Activated CD8-positive, alpha-beta T cell treated with anti-CD3 and anti-CD28 coated beads for 36 hours (primary cell): ENCODE measurements at regions of chr21 and their contacts with region 1.

Region 1: DNA sequence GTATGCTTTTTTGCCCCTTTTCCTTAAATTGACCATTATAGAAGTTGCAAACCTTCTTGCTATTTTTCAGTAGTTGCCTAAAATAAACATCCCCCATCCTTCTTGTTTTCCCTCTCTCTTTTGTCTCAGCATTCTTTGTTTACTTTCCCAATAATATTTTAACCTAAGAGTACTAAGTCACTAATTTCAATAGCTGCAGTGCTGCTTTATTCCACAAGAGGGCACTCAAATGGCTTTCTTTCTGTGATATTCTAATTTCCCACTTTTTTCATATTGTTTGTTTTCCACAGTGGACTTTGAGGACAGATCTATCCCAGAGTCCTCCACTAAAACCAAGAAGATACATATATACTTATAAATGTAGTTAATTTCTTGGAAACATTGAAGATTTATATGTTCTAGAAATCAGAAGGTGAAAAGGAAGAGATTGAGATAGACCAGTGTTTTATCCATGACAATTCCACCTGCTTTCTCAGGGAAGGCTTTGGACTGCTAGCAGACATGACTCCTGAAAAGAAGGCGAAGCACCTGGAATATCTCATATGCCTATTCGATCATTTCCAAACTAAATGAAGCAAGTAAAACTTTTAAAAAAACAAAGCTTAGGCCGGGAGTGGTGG is 104.8 kb upstream of the GRIK1 start:
- DNase-seq: peak; percentile 10
- ATAC-seq: no peak
- H3K4me3 Mint-ChIP-seq: no peak overlapping the region
- H3K27ac Mint-ChIP-seq: no peak overlapping the region
- H3K4me1 Mint-ChIP-seq: no peaks in the 10 kb centered on the region
- H3K27me3 Mint-ChIP-seq: peaks cover 4% of the 10 kb centered on the region
- CTCF ChIP-seq: peak; percentile 93

Region 2: GRCh38 chr21:29860346-29860745 is 184.2 kb before region 1 on chr21:
- CTCF ChIA-PET with region 1: no interaction called
- POLR2A ChIA-PET with region 1: no interaction called
- intact Hi-C with region 1: no loop called
- DNase-seq: no peak
- ATAC-seq: no peak
- H3K4me3 Mint-ChIP-seq: no peak overlapping the region
- H3K27ac Mint-ChIP-seq: no peak overlapping the region
- H3K4me1 Mint-ChIP-seq: no peaks in the 10 kb centered on the region
- H3K27me3 Mint-ChIP-seq: peaks cover 9% of the 10 kb centered on the region
- CTCF ChIP-seq: no peak

Region 3: DNA sequence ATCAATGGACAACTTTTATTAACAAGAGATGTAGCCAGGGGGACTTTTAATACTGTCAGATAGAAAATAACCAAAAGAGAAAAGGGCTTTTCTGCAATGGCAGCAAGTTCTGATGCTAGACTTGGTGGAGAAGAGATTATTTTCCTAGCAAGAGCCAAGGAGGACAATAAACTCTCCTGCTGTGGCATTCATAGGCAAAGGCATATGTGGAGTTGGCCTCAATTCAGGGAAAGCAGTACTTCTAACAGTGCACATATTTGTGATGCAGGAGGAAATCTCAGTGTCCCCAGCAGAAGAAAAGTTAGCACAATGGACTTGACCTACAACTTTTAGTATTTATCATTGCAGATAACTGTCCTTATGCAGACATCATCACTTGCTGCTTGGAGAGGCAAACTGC is 29.7 kb before region 1 on chr21:
- CTCF ChIA-PET with region 1: no interaction called
- POLR2A ChIA-PET with region 1: no interaction called
- intact Hi-C with region 1: no loop called
- DNase-seq: no peak
- ATAC-seq: no peak
- H3K4me3 Mint-ChIP-seq: no peak overlapping the region
- H3K27ac Mint-ChIP-seq: no peak overlapping the region
- H3K4me1 Mint-ChIP-seq: no peaks in the 10 kb centered on the region
- H3K27me3 Mint-ChIP-seq: no peaks in the 10 kb centered on the region
- CTCF ChIP-seq: no peak

Region 4: GRCh38 chr21:30027986-30028385 is 16.6 kb before region 1 on chr21:
- CTCF ChIA-PET with region 1: interaction called, 10 read pairs
- POLR2A ChIA-PET with region 1: no interaction called
- intact Hi-C with region 1: no loop called
- DNase-seq: no peak
- ATAC-seq: no peak
- H3K4me3 Mint-ChIP-seq: no peak overlapping the region
- H3K27ac Mint-ChIP-seq: no peak overlapping the region
- H3K4me1 Mint-ChIP-seq: no peaks in the 10 kb centered on the region
- H3K27me3 Mint-ChIP-seq: peaks cover 1% of the 10 kb centered on the region
- CTCF ChIP-seq: no peak

Region 5: DNA sequence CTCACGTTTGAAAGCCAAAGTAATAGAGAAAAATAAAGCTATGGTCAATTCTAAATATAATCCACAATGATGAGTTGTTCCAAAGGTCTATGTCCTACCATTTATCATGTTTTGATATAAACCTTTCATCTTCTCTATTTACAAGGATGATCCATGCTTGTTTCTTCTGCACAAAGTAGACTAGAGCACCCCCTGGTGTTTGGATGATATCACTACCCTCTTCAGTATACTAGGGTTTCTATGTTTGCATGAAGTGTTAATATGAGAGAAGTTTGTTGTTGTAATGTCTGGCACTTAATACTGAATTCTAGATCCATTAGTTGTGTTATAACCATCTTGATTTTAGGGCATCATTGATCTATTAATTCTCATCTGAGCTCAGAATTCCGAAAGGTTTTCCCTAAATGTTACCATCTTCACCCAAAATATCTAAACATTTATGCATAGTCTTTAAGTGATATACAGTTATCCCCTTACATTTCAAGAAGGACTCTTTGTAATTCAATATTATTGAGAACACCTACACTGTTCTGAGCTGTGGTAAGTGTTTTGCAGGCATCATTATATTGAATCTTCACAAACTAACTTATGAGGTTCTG is 150.2 kb after region 1 on chr21:
- CTCF ChIA-PET with region 1: interaction called, 7 read pairs
- POLR2A ChIA-PET with region 1: no interaction called
- intact Hi-C with region 1: loop called (anchors 10 kb)
- DNase-seq: peak; percentile 10
- ATAC-seq: no peak
- H3K4me3 Mint-ChIP-seq: no peak overlapping the region
- H3K27ac Mint-ChIP-seq: no peak overlapping the region
- H3K4me1 Mint-ChIP-seq: no peaks in the 10 kb centered on the region
- H3K27me3 Mint-ChIP-seq: no peaks in the 10 kb centered on the region
- CTCF ChIP-seq: peak; percentile 58